GM12878 (cell line): ENCODE measurements at regions of chr1 and their contacts with region 1.

Region 1: DNA sequence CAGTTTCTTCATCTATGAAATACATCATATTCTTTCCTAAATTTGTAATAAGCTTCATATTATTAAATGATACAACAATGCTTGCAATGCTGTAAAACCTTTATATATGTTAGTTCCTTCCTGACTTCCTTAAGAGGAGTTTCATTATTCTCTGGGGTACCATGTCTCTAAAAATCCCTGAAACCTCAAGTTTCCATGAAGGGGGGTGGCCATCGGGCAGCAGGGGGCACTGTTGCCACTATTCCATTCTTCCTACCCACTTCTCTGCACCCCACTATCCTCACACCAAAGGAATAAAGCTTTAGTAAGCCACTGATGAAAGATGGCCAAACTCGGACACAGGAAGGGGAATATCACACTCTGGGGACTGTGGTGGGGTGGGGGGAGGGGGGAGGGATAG is 9.0 kb upstream of the DMRTB1 start:
- DNase-seq: no peak
- ATAC-seq: peak; percentile 25; the same call in 1 of the 3 replicates
- H3K4me3 ChIP-seq: no peak overlapping the region
- H3K27ac ChIP-seq: no peak overlapping the region
- H3K4me1 ChIP-seq: no peaks in the 10 kb centered on the region
- H3K27me3 ChIP-seq: no peaks in the 10 kb centered on the region
- CTCF ChIP-seq: peak; percentile 20 to 37 (median 27); a peak in 4 of 6 replicates
- EP300 ChIP-seq: no peak
- POLR2A ChIP-seq: no peak
- RAD21 ChIP-seq: no peak

Region 2: GRCh38 chr1:53465080-53465479 is 14.9 kb after region 1 on chr1:
- CTCF ChIA-PET with region 1: interaction called, 11 read pairs
- POLR2A ChIA-PET with region 1: no interaction called
- RAD21 ChIA-PET with region 1: no interaction called
- SMC1A ChIA-PET with region 1: interaction called, 3 read pairs
- in situ Hi-C with region 1: no loop called
- intact Hi-C with region 1: no loop called
- DNase-seq: no peak
- ATAC-seq: no peak
- H3K4me3 ChIP-seq: no peak overlapping the region
- H3K27ac ChIP-seq: no peak overlapping the region
- H3K4me1 ChIP-seq: no peaks in the 10 kb centered on the region; the same call in 1 of the 2 replicates
- H3K27me3 ChIP-seq: no peaks in the 10 kb centered on the region; a peak in 1 of 4 replicates
- CTCF ChIP-seq: no peak
- EP300 ChIP-seq: no peak
- POLR2A ChIP-seq: no peak
- RAD21 ChIP-seq: no peak

Region 3: DNA sequence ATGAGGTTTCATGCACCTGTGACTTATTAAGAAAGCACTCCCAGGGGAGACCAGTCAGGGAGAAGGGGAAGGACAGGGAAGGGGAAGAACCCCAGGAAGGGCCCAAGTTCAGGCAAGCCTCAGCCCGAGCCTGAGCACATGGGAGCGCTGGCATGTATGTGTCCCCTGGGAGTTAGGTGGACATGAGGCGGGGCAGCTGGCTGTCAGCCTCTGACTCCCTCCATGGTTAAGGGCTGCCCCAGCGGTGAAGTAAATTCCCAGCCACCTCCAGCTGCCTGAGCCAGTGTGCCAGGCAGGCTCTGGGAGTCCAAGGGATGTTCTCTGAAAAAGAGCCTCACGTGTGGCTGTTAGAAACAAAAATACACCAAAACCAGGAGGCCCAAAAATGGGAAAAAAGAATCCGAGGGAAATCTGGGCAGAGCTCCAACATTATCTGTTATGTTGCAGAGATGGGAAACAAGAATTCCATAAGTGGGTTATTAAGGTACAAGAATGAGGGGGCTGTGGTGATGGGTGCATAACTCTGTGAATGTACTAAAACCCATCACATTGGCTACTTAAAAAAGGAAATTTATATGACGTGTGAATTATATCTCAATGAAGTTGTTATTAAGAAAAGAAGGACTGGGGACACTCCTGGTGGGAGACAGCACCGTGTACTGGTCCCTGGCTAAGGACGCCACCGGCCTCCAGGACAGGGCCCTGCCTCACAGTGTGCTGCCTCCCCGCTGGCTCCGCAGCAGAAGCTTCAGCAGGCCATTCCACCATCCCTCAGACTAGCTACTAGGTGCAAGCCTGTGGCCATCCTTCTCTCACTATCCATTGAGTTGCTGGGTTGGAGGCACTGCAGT is 27.7 kb after region 1 on chr1:
- CTCF ChIA-PET with region 1: interaction called, 6 read pairs
- POLR2A ChIA-PET with region 1: interaction called, 3 read pairs
- RAD21 ChIA-PET with region 1: no interaction called
- SMC1A ChIA-PET with region 1: interaction called, 3 read pairs
- in situ Hi-C with region 1: no loop called
- intact Hi-C with region 1: loop called (anchors 1 kb)
- DNase-seq: no peak
- ATAC-seq: peak; percentile 48
- H3K4me3 ChIP-seq: no peak overlapping the region
- H3K27ac ChIP-seq: no peak overlapping the region
- H3K4me1 ChIP-seq: no peaks in the 10 kb centered on the region
- H3K27me3 ChIP-seq: peaks cover 5 to 6% of the 10 kb centered on the region in 2 experiments
- CTCF ChIP-seq: no peak
- EP300 ChIP-seq: no peak
- POLR2A ChIP-seq: no peak
- RAD21 ChIP-seq: no peak